ENCODE measurements at regions of chr16 and their contacts with region 1.

Region 1: GRCh38 chr16:69930117-69930776 is 20.9 kb upstream of the CLEC18A start:
- DNase-seq: no peak
- ATAC-seq: peak; percentile 98
- H3K4me3 ChIP-seq: no peak overlapping the region
- H3K27ac ChIP-seq: no peak overlapping the region
- H3K4me1 ChIP-seq: no peaks in the 10 kb centered on the region
- H3K27me3 ChIP-seq: no peaks in the 10 kb centered on the region
- CTCF ChIP-seq: peak; percentile 60 to 71 (median 68)
- EP300 ChIP-seq: no peak
- POLR2A ChIP-seq: no peak
- RAD21 ChIP-seq: peak; percentile 72

Region 2: GRCh38 chr16:69709456-69710084 is 220.7 kb before region 1 on chr16:
- CTCF ChIA-PET with region 1: interaction called, 6 read pairs
- POLR2A ChIA-PET with region 1: no interaction called
- RAD21 ChIA-PET with region 1: interaction called, 5 read pairs
- SMC1A ChIA-PET with region 1: interaction called, 3 read pairs
- in situ Hi-C with region 1: no loop called
- intact Hi-C with region 1: loop called (anchors 5 kb)
- DNase-seq: peak; percentile 15
- ATAC-seq: peak; percentile 83
- H3K4me3 ChIP-seq: no peak overlapping the region
- H3K27ac ChIP-seq: no peak overlapping the region
- H3K4me1 ChIP-seq: no peaks in the 10 kb centered on the region
- H3K27me3 ChIP-seq: no peaks in the 10 kb centered on the region
- CTCF ChIP-seq: peak; percentile 43 to 74 (median 64); a peak in 5 of 6 replicates
- EP300 ChIP-seq: no peak
- POLR2A ChIP-seq: no peak
- RAD21 ChIP-seq: peak; percentile 73

Region 3: GRCh38 chr16:69796351-69797118 is 133.7 kb before region 1 on chr16:
- CTCF ChIA-PET with region 1: interaction called, 114 read pairs
- POLR2A ChIA-PET with region 1: interaction called, 4 read pairs
- RAD21 ChIA-PET with region 1: interaction called, 40 read pairs
- SMC1A ChIA-PET with region 1: interaction called, 46 read pairs
- in situ Hi-C with region 1: no loop called
- intact Hi-C with region 1: loop called (anchors 1 kb)
- DNase-seq: no peak
- ATAC-seq: peak; percentile 91
- H3K4me3 ChIP-seq: no peak overlapping the region
- H3K27ac ChIP-seq: no peak overlapping the region
- H3K4me1 ChIP-seq: no peaks in the 10 kb centered on the region
- H3K27me3 ChIP-seq: no peaks in the 10 kb centered on the region
- CTCF ChIP-seq: peak; percentile 79 to 90 (median 88)
- EP300 ChIP-seq: no peak
- POLR2A ChIP-seq: no peak
- RAD21 ChIP-seq: peak; percentile 88

Region 4: GRCh38 chr16:69865701-69866100 is 64.5 kb before region 1 on chr16:
- CTCF ChIA-PET with region 1: interaction called, 12 read pairs
- POLR2A ChIA-PET with region 1: no interaction called
- RAD21 ChIA-PET with region 1: interaction called, 3 read pairs
- SMC1A ChIA-PET with region 1: no interaction called
- in situ Hi-C with region 1: no loop called
- intact Hi-C with region 1: no loop called
- DNase-seq: no peak
- ATAC-seq: no peak
- H3K4me3 ChIP-seq: no peak overlapping the region
- H3K27ac ChIP-seq: no peak overlapping the region
- H3K4me1 ChIP-seq: no peaks in the 10 kb centered on the region
- H3K27me3 ChIP-seq: no peaks in the 10 kb centered on the region
- CTCF ChIP-seq: no peak
- EP300 ChIP-seq: no peak
- POLR2A ChIP-seq: no peak
- RAD21 ChIP-seq: no peak

Region 5: GRCh38 chr16:69885722-69886121 is 44.5 kb before region 1 on chr16:
- CTCF ChIA-PET with region 1: interaction called, 19 read pairs
- POLR2A ChIA-PET with region 1: no interaction called
- RAD21 ChIA-PET with region 1: interaction called, 5 read pairs
- SMC1A ChIA-PET with region 1: interaction called, 6 read pairs
- in situ Hi-C with region 1: no loop called
- intact Hi-C with region 1: no loop called
- DNase-seq: no peak
- ATAC-seq: no peak
- H3K4me3 ChIP-seq: no peak overlapping the region
- H3K27ac ChIP-seq: no peak overlapping the region
- H3K4me1 ChIP-seq: no peaks in the 10 kb centered on the region
- H3K27me3 ChIP-seq: no peaks in the 10 kb centered on the region
- CTCF ChIP-seq: no peak
- EP300 ChIP-seq: no peak
- POLR2A ChIP-seq: no peak
- RAD21 ChIP-seq: no peak